ENCODE measurements at regions of chr6 and their contacts with region 1.

Region 1: GRCh38 chr6:150928882-150929281 is 63.4 kb downstream of the MTHFD1L start:
- DNase-seq: no peak
- H3K4me3 Mint-ChIP-seq: no peak overlapping the region
- H3K27ac Mint-ChIP-seq: no peak overlapping the region
- H3K4me1 Mint-ChIP-seq: peaks cover 1% of the 10 kb centered on the region
- H3K27me3 Mint-ChIP-seq: no peaks in the 10 kb centered on the region
- CTCF ChIP-seq: peak; percentile 19

Region 2: GRCh38 chr6:150830439-150831165 is 98.3 kb before region 1 on chr6:
- CTCF ChIA-PET with region 1: no interaction called
- POLR2A ChIA-PET with region 1: no interaction called
- intact Hi-C with region 1: no loop called
- DNase-seq: no peak
- H3K4me3 Mint-ChIP-seq: no peak overlapping the region
- H3K27ac Mint-ChIP-seq: no peak overlapping the region
- H3K4me1 Mint-ChIP-seq: no peaks in the 10 kb centered on the region
- H3K27me3 Mint-ChIP-seq: no peaks in the 10 kb centered on the region
- CTCF ChIP-seq: no peak

Region 3: GRCh38 chr6:150940941-150941340 is 12.1 kb after region 1 on chr6:
- CTCF ChIA-PET with region 1: interaction called, 12 read pairs
- POLR2A ChIA-PET with region 1: no interaction called
- intact Hi-C with region 1: no loop called
- DNase-seq: no peak
- H3K4me3 Mint-ChIP-seq: no peak overlapping the region
- H3K27ac Mint-ChIP-seq: no peak overlapping the region
- H3K4me1 Mint-ChIP-seq: no peaks in the 10 kb centered on the region
- H3K27me3 Mint-ChIP-seq: no peaks in the 10 kb centered on the region
- CTCF ChIP-seq: no peak